Thyroid gland (tissue), 4 donors: ENCODE measurements at regions of chr6 and their contacts with region 1.

Region 1: DNA sequence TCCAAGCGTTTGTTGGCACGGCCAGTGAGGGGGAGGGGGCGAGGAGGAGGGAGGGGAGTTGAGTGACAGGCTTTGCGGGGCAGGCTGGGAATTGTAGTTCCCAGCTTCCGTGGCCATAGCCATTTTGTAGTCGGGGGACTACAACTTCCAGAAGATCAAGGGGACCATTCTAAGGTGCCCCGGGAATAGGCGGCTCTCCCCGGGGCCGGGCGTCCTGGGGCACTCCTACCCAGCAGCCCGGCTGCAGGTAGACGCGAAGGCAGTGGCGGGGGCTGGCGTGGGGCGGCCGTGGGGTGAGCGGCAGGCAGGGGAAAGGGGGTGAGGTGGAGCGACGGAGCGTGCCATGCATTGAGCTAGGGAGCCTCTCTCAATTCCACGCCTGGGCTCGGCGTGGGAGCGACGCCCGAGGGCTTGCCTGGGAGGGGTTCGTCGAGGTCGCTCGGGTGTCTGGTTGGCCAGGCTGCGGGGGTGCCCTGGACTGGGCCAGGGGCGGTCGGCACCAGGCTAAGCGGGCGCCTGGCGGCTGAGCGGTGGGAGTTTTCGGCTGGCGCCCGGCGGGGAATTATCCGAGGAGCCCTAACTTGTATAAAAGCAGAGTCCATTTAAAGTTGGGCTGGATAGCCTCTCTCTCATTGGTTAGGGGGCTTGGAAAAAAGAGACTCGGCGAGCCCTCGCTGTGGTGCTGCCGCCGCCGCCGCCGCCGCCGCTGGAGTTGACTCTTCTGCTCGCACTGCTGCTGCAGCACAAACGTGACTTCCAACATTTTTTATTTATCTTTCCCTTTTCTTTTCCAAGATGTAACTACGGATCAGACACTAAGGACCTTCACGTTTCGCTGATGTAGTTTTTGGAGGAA is at the start of gene JARID2:
- DNase-seq: peak; percentile 99 to 100
- H3K4me3 ChIP-seq: peak within 1 kb of the TSS; percentile 77 to 79 (median 79)
- H3K27ac ChIP-seq: peak within 1 kb of the TSS; percentile 86 to 91 (median 90)
- H3K4me1 ChIP-seq: peaks cover 4 to 14% of the 10 kb centered on the region in 2 donors
- H3K27me3 ChIP-seq: no peaks in the 10 kb centered on the region
- CTCF ChIP-seq: peak in 2 of 6 experiments; percentile 11 to 27
- POLR2A ChIP-seq: peak; percentile 66 to 95
- total RNA-seq, gene JARID2: 6.6 to 8.1 (median 7.5) TPM

Region 2: DNA sequence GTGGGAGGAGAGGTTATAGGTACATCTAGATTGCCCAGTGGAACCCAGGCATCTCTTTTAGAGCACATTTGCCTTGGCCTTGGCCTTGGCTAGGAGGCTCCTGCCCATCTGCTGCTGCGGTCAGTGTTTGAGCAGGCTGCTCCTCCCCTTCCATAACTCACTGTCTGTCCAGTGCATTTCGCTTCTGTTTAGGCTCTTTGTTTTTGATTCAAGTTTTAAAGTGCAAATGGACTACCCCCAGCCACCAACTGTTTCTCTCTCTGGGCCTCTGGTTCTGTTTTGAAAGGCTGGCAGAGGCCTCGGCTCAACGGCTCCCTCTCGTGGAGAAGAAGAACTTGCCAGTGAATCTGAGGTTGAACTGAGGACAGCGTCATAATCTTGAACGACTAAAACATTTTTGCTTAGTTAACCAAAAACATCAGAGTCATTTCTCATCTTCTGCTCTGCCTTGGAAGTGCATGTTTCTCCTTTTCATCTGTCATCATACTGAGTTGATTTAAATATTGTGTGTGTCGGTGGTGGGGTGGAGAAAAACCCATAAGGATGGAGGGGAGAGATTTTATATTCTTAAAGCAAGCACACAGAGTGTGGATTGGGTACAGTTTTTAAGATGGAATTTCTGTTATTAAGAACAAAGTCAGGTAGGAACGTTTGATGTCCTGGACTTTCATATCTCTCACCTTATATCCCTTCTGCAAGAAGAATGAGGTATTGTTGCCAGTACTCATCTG is 245.8 kb after region 1 on chr6:
- intact Hi-C with region 1: loop called (anchors 10 kb)
- DNase-seq: peak; percentile 78 to 88
- H3K4me3 ChIP-seq: no peak overlapping the region
- H3K27ac ChIP-seq: peak overlapping the region in 2 of 3 donors; percentile 43
- H3K4me1 ChIP-seq: peaks cover 13 to 15% of the 10 kb centered on the region in 2 donors
- H3K27me3 ChIP-seq: no peaks in the 10 kb centered on the region
- CTCF ChIP-seq: peak; percentile 75 to 98 (median 88)
- POLR2A ChIP-seq: no peak